ENCODE measurements at regions of chr2 and their contacts with region 1.

Region 1: DNA sequence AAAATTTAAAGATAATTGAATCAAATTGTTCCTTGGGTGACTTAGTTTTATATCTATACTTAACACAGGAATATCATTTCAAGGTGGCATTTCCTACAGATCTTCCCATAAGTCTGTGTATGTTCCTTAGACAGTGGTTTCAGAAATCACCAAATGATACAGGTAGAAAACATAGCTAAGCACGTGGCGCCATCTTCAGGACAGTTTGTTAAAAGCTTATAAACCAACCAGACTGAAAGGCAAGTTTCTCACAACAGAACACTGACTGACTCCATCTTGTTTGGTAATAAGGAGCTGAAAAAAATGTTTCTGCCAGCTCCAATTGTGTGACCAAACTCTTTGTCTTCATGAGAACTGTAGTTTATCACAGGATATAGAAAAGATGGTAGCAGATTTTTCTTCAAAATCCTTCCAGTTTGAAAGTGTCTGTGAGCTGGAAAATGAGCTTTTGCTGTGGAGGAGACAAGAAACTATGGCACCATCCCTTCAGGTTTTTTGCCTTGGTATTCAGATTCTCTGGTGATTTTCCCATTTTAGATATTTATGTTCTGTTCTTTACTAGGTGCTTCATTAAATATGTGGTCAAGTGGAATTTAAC is 34.8 kb upstream of the NEUROD1 start:
- DNase-seq: peak in 1 of 2 experiments; percentile 77
- H3K4me3 ChIP-seq: no peak overlapping the region
- H3K27ac ChIP-seq: no peak overlapping the region
- H3K4me1 ChIP-seq: no peaks in the 10 kb centered on the region
- H3K27me3 ChIP-seq: no peaks in the 10 kb centered on the region
- CTCF ChIP-seq: peak in 2 of 3 experiments; percentile 67 to 77; a peak in 3 of 4 replicates
- EP300 ChIP-seq: no peak
- POLR2A ChIP-seq: no peak
- RAD21 ChIP-seq: peak; percentile 95 to 97

Region 2: DNA sequence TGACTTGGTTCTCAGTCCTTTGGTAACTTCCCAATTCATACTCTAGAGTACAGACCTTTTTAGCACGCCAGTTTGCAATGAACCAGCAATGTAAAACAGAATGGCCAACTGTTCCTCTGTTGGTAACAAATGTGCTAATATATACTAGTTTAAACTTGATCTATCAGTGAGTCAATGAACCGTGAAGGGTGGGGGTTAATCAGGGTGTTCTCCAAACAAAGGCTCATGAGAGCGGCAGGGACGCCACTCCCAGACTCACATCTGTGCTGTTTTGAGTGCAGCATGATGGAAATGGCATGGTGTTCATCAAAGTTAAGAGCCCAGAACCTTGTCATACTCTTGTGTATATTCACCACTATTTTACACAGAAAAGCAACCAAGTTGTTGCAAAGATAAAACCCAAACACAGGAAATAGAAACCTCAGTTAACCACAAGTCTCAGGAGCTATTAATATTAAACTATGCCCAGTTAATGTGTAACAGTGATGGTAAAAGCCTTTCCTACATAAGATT is 128.5 kb before region 1 on chr2:
- CTCF ChIA-PET with region 1: interaction called, 34 read pairs
- POLR2A ChIA-PET with region 1: no interaction called
- DNase-seq: no peak
- H3K4me3 ChIP-seq: no peak overlapping the region
- H3K27ac ChIP-seq: no peak overlapping the region
- H3K4me1 ChIP-seq: peaks cover 0 to 7% (median 0%) of the 10 kb centered on the region in 4 experiments; a peak in 2 of 7 replicates
- H3K27me3 ChIP-seq: no peaks in the 10 kb centered on the region
- CTCF ChIP-seq: no peak
- EP300 ChIP-seq: no peak
- POLR2A ChIP-seq: no peak
- RAD21 ChIP-seq: no peak

Region 3: GRCh38 chr2:181642086-181642485 is 73.0 kb before region 1 on chr2:
- CTCF ChIA-PET with region 1: interaction called, 14 read pairs
- POLR2A ChIA-PET with region 1: no interaction called
- DNase-seq: no peak
- H3K4me3 ChIP-seq: no peak overlapping the region
- H3K27ac ChIP-seq: no peak overlapping the region
- H3K4me1 ChIP-seq: no peaks in the 10 kb centered on the region
- H3K27me3 ChIP-seq: no peaks in the 10 kb centered on the region
- CTCF ChIP-seq: no peak
- EP300 ChIP-seq: no peak
- POLR2A ChIP-seq: no peak
- RAD21 ChIP-seq: no peak

Region 4: DNA sequence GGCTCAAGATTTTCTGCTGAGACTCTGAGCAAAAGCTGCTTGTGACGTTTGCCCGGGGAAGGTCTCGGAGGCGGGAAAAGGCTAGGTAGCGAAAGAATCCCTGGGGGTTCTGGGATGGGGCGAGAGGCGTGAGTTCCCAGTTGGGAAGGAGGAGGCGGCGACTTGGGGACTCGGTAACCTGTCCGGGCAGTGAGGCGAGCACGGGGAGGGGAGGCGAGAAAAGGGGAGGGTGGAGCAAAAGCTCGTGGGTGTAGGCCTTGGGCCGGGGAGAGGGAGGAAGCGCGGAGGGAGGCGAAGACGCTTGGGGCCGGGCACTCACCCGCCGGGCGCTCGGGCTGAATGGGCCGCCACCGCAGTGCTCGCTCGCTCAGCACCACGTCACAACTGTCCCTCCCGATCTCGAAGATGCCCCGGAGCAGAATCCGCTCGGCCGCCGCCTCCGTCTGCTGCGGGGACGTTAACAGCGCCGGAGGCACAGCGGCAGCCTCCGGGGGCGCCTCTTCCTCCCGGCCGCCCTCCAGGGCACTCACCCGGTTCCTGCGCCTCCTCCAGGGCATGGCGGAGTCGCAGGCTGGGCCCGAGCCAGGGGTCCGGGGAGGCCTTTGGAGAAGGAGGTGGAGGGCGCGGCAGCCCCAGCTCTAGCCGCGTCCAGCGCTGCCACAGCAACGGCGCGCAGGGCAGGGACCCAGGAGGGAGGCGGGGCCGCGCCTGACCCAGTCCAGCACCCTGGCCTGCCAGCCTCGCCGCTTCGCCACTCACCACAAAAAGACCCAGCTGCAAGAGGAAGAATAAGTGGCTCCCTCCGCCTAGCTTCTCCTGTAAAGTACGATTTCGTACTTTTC is 58.5 kb before region 1 on chr2 and contains the start of gene CERKL:
- CTCF ChIA-PET with region 1: interaction called, 17 read pairs
- POLR2A ChIA-PET with region 1: no interaction called
- DNase-seq: peak; percentile 66 to 83
- H3K4me3 ChIP-seq: peak within 1 kb of the TSS; percentile 41 to 79 (median 65)
- H3K27ac ChIP-seq: no peak within 1 kb of the TSS
- H3K4me1 ChIP-seq: peaks cover 4 to 11% (median 7%) of the 10 kb centered on the region in 4 experiments; a peak in 5 of 7 replicates
- H3K27me3 ChIP-seq: peaks cover 23 to 53% (median 45%) of the 10 kb centered on the region in 4 experiments
- CTCF ChIP-seq: peak in 2 of 3 experiments; percentile 3 to 27; a peak in 2 of 4 replicates
- EP300 ChIP-seq: no peak
- POLR2A ChIP-seq: no peak
- RAD21 ChIP-seq: no peak
- total RNA-seq, gene CERKL: not detected in 2 replicates

Region 5: GRCh38 chr2:181698223-181698622 is 16.9 kb before region 1 on chr2:
- CTCF ChIA-PET with region 1: interaction called, 17 read pairs
- POLR2A ChIA-PET with region 1: no interaction called
- DNase-seq: no peak
- H3K4me3 ChIP-seq: no peak overlapping the region
- H3K27ac ChIP-seq: no peak overlapping the region
- H3K4me1 ChIP-seq: no peaks in the 10 kb centered on the region
- H3K27me3 ChIP-seq: no peaks in the 10 kb centered on the region
- CTCF ChIP-seq: no peak
- EP300 ChIP-seq: no peak
- POLR2A ChIP-seq: no peak
- RAD21 ChIP-seq: no peak

Region 6: GRCh38 chr2:181810823-181811695 is 95.9 kb after region 1 on chr2:
- CTCF ChIA-PET with region 1: no interaction called
- POLR2A ChIA-PET with region 1: no interaction called
- DNase-seq: no peak
- H3K4me3 ChIP-seq: no peak overlapping the region
- H3K27ac ChIP-seq: no peak overlapping the region
- H3K4me1 ChIP-seq: peaks cover 0 to 6% (median 2%) of the 10 kb centered on the region in 4 experiments; a peak in 2 of 7 replicates
- H3K27me3 ChIP-seq: no peaks in the 10 kb centered on the region
- CTCF ChIP-seq: no peak
- EP300 ChIP-seq: no peak
- POLR2A ChIP-seq: no peak
- RAD21 ChIP-seq: no peak

Measured in H1 (cell line).